GM10248 (cell line): ENCODE measurements at regions of chr14 and their contacts with region 1.

Region 1: DNA sequence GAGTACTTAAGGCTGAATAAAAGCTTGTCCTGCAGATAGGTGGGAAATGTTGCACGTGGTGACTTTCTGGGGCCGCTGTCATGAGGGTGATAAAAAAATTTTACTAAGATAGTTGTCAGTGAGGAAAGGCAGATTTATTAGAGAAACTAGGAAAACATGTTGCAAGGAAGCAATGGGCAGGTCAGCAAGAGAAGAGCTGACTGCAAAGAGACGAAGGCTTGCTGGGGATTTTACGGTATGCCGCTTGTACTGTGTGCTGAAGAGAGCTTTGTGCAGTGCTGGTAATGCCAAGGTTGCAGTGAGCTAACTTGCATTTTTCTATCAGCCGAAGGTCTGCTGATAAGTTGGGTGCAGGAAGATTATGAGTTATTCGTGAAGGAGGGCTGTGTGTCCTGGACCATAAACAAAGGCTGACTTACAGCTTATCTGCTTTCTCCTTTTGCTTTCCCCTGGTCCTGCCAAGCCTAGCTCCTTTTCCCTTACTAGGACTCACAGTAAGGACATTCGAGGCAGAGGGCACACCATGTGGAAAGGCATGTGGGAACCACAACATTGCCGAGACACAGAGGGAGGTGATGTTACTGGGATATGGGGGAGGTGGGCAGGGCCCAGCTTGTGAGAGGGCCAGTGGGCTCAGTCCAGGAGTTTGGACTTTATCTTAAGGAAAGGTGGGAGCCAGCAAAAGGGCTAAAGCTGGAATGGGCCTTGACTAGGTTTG is 7.4 kb upstream of the CCDC88C start:
- DNase-seq: no peak
- CTCF ChIP-seq: no peak

Region 2: DNA sequence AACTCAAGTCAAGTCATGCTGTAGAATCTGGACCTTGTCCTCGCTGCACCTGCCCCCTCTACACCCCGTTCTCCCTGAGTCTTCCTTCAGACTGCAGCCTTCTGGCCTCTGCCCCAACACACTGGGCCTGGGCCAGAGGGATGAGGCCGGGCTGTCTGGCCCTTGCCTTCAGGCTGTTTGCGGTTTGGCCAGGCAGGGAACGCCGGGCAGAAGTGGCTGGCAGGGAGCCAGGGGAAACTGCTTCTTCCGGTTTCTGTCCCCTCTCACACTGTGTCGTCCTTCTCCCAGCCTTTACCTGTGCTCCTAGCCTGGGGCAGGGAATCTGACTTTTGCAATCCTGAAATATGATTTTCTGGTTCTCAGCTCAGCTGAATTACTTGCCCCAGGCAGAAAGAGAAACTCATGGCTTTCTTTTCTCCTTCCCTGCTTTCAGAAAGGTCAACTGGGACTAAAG is 297.5 kb before region 1 on chr14:
- CTCF ChIA-PET with region 1: no interaction called
- POLR2A ChIA-PET with region 1: no interaction called
- DNase-seq: no peak
- CTCF ChIP-seq: no peak

Region 3: GRCh38 chr14:91444335-91445020 is 19.5 kb after region 1 on chr14:
- CTCF ChIA-PET with region 1: interaction called, 23 read pairs
- POLR2A ChIA-PET with region 1: no interaction called
- DNase-seq: no peak
- CTCF ChIP-seq: no peak

Region 4: GRCh38 chr14:91568626-91569025 is 143.7 kb after region 1 on chr14:
- CTCF ChIA-PET with region 1: no interaction called
- POLR2A ChIA-PET with region 1: no interaction called
- DNase-seq: no peak
- CTCF ChIP-seq: no peak

Region 5: GRCh38 chr14:91899212-91899611 is 474.2 kb after region 1 on chr14:
- CTCF ChIA-PET with region 1: no interaction called
- POLR2A ChIA-PET with region 1: no interaction called
- DNase-seq: no peak
- CTCF ChIP-seq: no peak